Psoas muscle (tissue), 8 donors: ENCODE measurements at regions of chr12 and their contacts with region 1.

Region 1: DNA sequence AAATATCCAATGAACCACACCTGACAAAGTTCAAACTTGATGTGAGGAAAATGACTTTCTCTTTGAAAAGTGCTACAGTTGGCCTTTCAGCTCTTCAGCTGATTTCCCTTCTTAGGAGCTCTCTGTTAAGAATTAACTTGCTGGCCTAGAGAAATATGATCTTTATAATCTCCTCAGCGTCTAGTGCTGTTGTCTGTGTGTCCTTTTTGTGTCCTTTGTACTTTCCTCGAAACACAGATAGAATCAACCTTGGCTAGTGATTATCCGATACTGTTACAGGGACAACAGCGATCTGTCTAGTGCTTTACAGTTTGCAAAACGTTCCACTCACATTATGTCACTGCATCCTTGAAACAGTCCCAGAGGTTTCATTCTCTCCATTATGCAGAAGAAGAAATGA is 162.8 kb upstream of the RMST start:
- DNase-seq: no peak
- ATAC-seq: no peak
- H3K4me3 ChIP-seq: no peak overlapping the region
- H3K27ac ChIP-seq: no peak overlapping the region
- H3K4me1 ChIP-seq: no peaks in the 10 kb centered on the region
- H3K27me3 ChIP-seq: no peaks in the 10 kb centered on the region
- CTCF ChIP-seq: no peak

Region 2: GRCh38 chr12:97169889-97170567 is 129.8 kb before region 1 on chr12:
- intact Hi-C with region 1: loop called in 1 of 2 experiments (anchors 5 kb)
- DNase-seq: no peak
- ATAC-seq: no peak
- H3K4me3 ChIP-seq: no peak overlapping the region
- H3K27ac ChIP-seq: no peak overlapping the region
- H3K4me1 ChIP-seq: no peaks in the 10 kb centered on the region
- H3K27me3 ChIP-seq: no peaks in the 10 kb centered on the region
- CTCF ChIP-seq: no peak